ENCODE measurements at regions of chr2 and their contacts with region 1.

Region 1: DNA sequence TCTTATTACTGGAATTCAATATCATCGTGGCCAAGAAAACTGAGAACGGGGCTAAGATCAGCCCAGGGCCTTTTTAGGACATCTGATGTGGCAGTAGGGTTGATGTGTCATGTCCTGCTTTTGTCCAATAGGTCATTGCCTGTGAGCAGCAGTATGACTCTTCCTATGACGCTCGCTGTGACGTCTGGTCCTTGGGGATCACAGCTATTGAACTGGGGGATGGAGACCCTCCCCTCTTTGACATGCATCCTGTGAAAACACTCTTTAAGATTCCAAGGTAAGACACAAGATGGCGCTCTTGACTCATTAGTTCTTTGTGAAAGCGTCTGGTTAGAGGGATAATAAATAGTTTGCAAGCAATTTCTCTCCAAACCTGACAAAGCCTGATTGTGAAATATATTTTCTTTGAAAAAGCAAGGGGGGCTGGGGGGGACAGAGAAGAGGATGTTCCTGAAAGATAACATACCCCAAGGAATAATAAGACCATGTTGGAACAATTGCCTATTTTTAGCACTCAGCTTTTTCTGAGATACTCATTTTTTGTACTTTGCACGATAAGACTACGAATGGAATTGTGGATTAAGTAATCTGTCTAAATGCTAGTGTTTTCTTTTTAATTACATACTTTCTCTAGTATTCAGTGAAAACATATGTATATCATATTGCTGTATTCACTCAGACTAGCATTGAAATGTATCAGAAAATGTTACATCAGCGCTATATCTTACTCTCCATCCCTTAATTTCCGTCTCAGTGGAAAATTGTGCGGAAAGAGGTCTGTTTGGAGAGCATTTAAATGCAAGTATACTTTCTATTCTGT is 58.1 kb downstream of the MYO3B start:
- DNase-seq: peak; percentile 61
- H3K4me3 ChIP-seq: peak overlapping the region; percentile 14 to 17; a peak in 2 of 4 replicates
- H3K27ac ChIP-seq: no peak overlapping the region
- H3K4me1 ChIP-seq: peaks cover 0 to 5% of the 10 kb centered on the region in 2 experiments; a peak in 2 of 4 replicates
- H3K27me3 ChIP-seq: no peaks in the 10 kb centered on the region
- CTCF ChIP-seq: peak; percentile 73
- EP300 ChIP-seq: no peak
- RAD21 ChIP-seq: peak; percentile 85

Region 2: GRCh38 chr2:169415233-169415748 is 820.8 kb before region 1 on chr2:
- CTCF ChIA-PET with region 1: no interaction called
- POLR2A ChIA-PET with region 1: no interaction called
- DNase-seq: no peak
- H3K4me3 ChIP-seq: no peak overlapping the region
- H3K27ac ChIP-seq: no peak overlapping the region
- H3K4me1 ChIP-seq: no peaks in the 10 kb centered on the region
- H3K27me3 ChIP-seq: no peaks in the 10 kb centered on the region; the same call in 1 of the 2 replicates
- CTCF ChIP-seq: no peak
- EP300 ChIP-seq: no peak
- RAD21 ChIP-seq: no peak

Region 3: DNA sequence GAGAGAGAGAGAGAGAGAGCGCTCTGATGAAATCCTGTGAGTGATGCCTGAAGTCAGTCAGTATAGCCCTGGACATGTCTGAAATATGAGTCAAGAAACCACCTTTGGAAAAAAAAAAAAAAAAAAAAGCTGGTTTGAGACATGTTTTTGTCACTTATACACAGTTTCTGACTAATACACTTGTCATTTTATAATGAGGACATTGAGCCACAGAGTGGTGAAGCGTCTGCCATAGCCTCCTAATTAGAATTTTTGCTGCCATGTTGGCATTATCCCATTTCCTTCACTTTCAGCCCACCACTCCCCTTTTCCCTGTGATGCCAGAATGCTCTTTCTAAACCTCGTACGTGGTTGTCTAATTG is 73.8 kb before region 1 on chr2:
- CTCF ChIA-PET with region 1: no interaction called
- POLR2A ChIA-PET with region 1: no interaction called
- DNase-seq: no peak
- H3K4me3 ChIP-seq: no peak overlapping the region
- H3K27ac ChIP-seq: no peak overlapping the region
- H3K4me1 ChIP-seq: peaks cover 0 to 1% of the 10 kb centered on the region in 2 experiments; a peak in 1 of 4 replicates
- H3K27me3 ChIP-seq: no peaks in the 10 kb centered on the region
- CTCF ChIP-seq: no peak
- EP300 ChIP-seq: no peak
- RAD21 ChIP-seq: no peak

Region 4: GRCh38 chr2:170221317-170222288 is 14.5 kb before region 1 on chr2:
- CTCF ChIA-PET with region 1: interaction called, 30 read pairs
- POLR2A ChIA-PET with region 1: no interaction called
- DNase-seq: no peak
- H3K4me3 ChIP-seq: no peak overlapping the region
- H3K27ac ChIP-seq: peak overlapping the region; percentile 7 to 25; a peak in 3 of 4 replicates
- H3K4me1 ChIP-seq: peaks cover 0 to 16% of the 10 kb centered on the region in 2 experiments; a peak in 3 of 4 replicates
- H3K27me3 ChIP-seq: no peaks in the 10 kb centered on the region
- CTCF ChIP-seq: no peak
- EP300 ChIP-seq: no peak
- RAD21 ChIP-seq: no peak

Region 5: DNA sequence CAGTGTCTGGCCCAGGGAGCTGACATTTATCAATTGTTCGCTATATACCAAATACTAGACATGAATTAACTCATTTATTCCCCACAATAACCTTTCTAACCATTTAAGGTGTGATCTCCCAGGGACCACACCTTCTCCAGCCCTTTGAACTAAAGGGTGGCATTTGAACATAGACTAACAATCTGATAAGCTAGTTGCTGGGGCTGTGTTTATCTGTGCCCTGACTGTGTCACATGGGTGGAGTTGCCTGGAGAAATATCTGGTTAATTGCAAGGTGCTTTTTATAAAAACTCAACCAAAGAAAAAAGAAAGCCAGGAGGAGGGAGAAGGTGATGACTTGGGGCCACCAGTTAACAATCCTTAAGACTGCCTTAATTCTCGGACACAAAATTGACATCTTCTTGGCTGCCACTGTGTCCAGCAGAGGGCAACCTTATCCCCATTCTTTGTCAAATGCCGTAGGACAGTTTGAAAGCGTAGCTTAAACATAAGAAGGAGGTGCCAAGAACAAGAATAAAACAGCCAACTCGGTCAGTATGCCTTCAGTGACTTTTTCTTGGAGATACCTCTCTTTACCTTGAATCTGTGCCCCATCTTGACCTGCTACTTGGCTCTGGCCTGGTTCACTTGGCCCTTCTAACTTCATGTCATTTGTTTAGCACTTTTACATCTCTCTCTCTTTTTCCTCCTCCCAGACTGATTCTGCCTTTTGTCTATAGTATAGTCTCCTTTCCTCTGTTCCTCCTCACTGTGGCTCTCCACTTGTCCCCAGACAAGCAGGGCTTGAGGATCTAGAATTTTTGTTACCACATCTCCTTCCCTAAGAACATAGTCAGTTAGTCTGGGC is 125.2 kb after region 1 on chr2:
- CTCF ChIA-PET with region 1: interaction called, 20 read pairs
- POLR2A ChIA-PET with region 1: no interaction called
- DNase-seq: peak; percentile 32
- H3K4me3 ChIP-seq: peak overlapping the region in 1 of 2 experiments; percentile 28; a peak in 1 of 4 replicates
- H3K27ac ChIP-seq: no peak overlapping the region
- H3K4me1 ChIP-seq: no peaks in the 10 kb centered on the region
- H3K27me3 ChIP-seq: peaks cover 8% of the 10 kb centered on the region; the same call in 1 of the 2 replicates
- CTCF ChIP-seq: peak; percentile 76
- EP300 ChIP-seq: no peak
- RAD21 ChIP-seq: peak; percentile 59

Region 6: DNA sequence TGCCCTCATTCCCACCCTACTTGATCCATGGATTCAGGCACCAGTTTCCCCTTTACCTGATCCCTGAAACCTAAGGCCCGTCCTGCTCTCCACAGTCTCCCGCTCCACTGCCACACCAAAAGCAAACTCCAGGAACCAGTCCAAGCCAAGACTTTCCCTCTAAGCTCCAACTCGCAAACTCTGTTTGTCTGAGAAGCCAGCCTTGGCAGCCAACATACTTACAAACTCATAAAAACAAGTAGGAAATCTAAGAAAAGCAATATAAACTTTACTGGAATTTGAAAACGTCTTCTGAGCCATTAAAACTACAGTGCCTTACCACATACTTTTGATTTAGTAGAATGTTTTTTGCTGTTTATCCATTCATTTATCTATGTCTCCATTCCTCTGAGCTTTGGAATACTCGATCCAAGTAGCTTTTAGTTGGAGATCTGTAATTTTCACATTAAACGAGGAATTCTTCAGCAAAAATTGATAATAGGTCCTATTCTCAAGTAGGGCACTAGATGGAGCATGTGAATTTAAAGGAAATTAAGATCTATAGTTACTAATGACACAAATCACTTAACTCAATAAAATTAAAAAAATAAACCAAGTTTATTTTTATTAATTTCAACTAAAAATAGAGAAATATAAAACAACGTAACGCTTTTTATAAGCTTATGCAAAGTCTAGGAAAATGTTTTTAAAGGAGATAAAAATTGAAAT is 141.6 kb after region 1 on chr2:
- CTCF ChIA-PET with region 1: interaction called, 11 read pairs
- POLR2A ChIA-PET with region 1: no interaction called
- DNase-seq: no peak
- H3K4me3 ChIP-seq: no peak overlapping the region
- H3K27ac ChIP-seq: no peak overlapping the region
- H3K4me1 ChIP-seq: no peaks in the 10 kb centered on the region
- H3K27me3 ChIP-seq: no peaks in the 10 kb centered on the region
- CTCF ChIP-seq: peak; percentile 29
- EP300 ChIP-seq: no peak
- RAD21 ChIP-seq: no peak

Region 7: GRCh38 chr2:170822290-170823087 is 586.4 kb after region 1 on chr2:
- CTCF ChIA-PET with region 1: interaction called, 18 read pairs
- POLR2A ChIA-PET with region 1: no interaction called
- DNase-seq: peak; percentile 79
- H3K4me3 ChIP-seq: peak overlapping the region; percentile 31 to 38
- H3K27ac ChIP-seq: no peak overlapping the region
- H3K4me1 ChIP-seq: peaks cover 0 to 31% of the 10 kb centered on the region in 2 experiments; a peak in 1 of 4 replicates
- H3K27me3 ChIP-seq: peaks cover 89% of the 10 kb centered on the region
- CTCF ChIP-seq: peak; percentile 55
- EP300 ChIP-seq: no peak
- RAD21 ChIP-seq: no peak

Measured in SK-N-SH (cell line).